A549 (cell line): ENCODE measurements at regions of chr7 and their contacts with region 1.

Region 1: GRCh38 chr7:5237286-5237685 is 45.5 kb upstream of the SLC29A4 start:
- DNase-seq: no peak
- ATAC-seq: no peak
- H3K4me3 ChIP-seq: no peak overlapping the region
- H3K27ac ChIP-seq: no peak overlapping the region
- H3K4me1 ChIP-seq: no peaks in the 10 kb centered on the region
- CTCF ChIP-seq: no peak
- EP300 ChIP-seq: no peak
- POLR2A ChIP-seq: no peak
- RAD21 ChIP-seq: no peak

Region 2: DNA sequence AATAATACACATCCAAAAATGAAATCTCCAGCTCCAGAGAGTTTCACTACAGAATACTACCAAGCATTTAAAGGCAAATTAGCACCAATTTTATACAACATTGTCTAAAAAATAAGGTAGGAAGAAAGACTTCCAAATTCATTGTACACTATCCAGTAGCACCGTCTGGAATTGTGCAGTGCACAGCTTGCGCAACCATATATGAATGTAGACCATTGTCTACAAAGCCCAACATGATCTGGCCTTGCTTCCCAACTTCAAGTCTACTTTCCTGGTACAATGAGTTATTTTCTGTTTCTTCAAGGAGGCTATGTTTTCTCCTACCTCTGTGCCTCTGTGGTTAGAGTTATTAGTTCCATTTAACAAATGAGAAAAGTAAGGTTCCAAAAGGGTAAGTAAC is 670.6 kb before region 1 on chr7:
- CTCF ChIA-PET with region 1: no interaction called
- POLR2A ChIA-PET with region 1: no interaction called
- DNase-seq: no peak
- ATAC-seq: no peak
- H3K4me3 ChIP-seq: no peak overlapping the region
- H3K27ac ChIP-seq: no peak overlapping the region
- H3K4me1 ChIP-seq: no peaks in the 10 kb centered on the region
- CTCF ChIP-seq: no peak
- EP300 ChIP-seq: no peak
- POLR2A ChIP-seq: no peak
- RAD21 ChIP-seq: no peak

Region 3: GRCh38 chr7:4996696-4997222 is 240.5 kb before region 1 on chr7:
- CTCF ChIA-PET with region 1: no interaction called
- POLR2A ChIA-PET with region 1: no interaction called
- DNase-seq: no peak
- ATAC-seq: no peak; a peak in 1 of 6 replicates
- H3K4me3 ChIP-seq: no peak overlapping the region
- H3K27ac ChIP-seq: no peak overlapping the region
- H3K4me1 ChIP-seq: no peaks in the 10 kb centered on the region
- CTCF ChIP-seq: no peak
- EP300 ChIP-seq: no peak
- POLR2A ChIP-seq: no peak
- RAD21 ChIP-seq: no peak

Region 4: GRCh38 chr7:5222841-5223421 is 14.4 kb before region 1 on chr7:
- CTCF ChIA-PET with region 1: interaction called, 21 read pairs
- POLR2A ChIA-PET with region 1: no interaction called
- DNase-seq: no peak
- ATAC-seq: peak in 1 of 2 experiments; percentile 43; a peak in 1 of 6 replicates
- H3K4me3 ChIP-seq: no peak overlapping the region
- H3K27ac ChIP-seq: no peak overlapping the region
- H3K4me1 ChIP-seq: peaks cover 7% of the 10 kb centered on the region; the same call in 1 of the 3 replicates
- CTCF ChIP-seq: no peak
- EP300 ChIP-seq: no peak
- POLR2A ChIP-seq: no peak
- RAD21 ChIP-seq: no peak

Region 5: DNA sequence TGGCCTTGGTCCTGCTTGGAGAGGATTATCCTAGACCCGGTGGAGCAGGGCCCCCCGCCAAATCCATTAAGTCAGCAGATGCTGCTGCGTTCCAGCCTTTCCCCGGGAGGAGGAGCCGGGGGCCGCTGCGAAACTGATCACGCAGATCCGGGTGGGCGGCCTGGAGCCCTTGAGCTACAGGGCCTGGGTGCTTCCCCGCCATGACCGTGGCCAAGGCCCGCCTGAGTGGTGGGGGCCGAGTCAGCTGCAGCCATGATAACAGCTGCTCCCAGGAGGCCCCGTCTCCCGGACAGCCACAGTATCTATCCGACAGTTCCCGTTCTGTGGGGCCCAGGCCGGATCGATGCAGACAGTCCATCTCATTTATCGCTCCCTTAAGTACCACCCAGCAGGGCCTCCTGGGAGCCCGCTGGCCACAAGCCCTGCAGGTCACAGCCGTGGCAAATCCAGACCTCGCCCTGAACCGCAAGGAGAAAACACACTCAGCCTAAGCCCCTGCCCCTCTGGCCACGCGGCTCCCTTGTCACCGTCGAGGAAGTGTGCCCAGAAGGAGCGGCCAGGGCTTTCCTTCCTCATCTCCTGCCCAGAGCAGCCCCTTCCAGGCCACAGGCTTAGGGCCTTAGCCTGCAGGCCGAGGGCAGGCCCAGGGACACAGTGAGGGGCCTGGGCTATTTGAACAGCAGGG is 11.1 kb after region 1 on chr7:
- CTCF ChIA-PET with region 1: interaction called, 30 read pairs
- POLR2A ChIA-PET with region 1: no interaction called
- DNase-seq: no peak
- ATAC-seq: no peak
- H3K4me3 ChIP-seq: no peak overlapping the region
- H3K27ac ChIP-seq: no peak overlapping the region
- H3K4me1 ChIP-seq: no peaks in the 10 kb centered on the region
- CTCF ChIP-seq: no peak
- EP300 ChIP-seq: no peak
- POLR2A ChIP-seq: no peak
- RAD21 ChIP-seq: no peak

Region 6: GRCh38 chr7:5278766-5279165 is 41.5 kb after region 1 on chr7:
- CTCF ChIA-PET with region 1: interaction called, 20 read pairs
- POLR2A ChIA-PET with region 1: no interaction called
- DNase-seq: no peak
- ATAC-seq: no peak
- H3K4me3 ChIP-seq: no peak overlapping the region
- H3K27ac ChIP-seq: no peak overlapping the region
- H3K4me1 ChIP-seq: peaks cover under 1% of the 10 kb centered on the region; the same call in 1 of the 3 replicates
- CTCF ChIP-seq: no peak
- EP300 ChIP-seq: no peak
- POLR2A ChIP-seq: no peak
- RAD21 ChIP-seq: no peak

Region 7: DNA sequence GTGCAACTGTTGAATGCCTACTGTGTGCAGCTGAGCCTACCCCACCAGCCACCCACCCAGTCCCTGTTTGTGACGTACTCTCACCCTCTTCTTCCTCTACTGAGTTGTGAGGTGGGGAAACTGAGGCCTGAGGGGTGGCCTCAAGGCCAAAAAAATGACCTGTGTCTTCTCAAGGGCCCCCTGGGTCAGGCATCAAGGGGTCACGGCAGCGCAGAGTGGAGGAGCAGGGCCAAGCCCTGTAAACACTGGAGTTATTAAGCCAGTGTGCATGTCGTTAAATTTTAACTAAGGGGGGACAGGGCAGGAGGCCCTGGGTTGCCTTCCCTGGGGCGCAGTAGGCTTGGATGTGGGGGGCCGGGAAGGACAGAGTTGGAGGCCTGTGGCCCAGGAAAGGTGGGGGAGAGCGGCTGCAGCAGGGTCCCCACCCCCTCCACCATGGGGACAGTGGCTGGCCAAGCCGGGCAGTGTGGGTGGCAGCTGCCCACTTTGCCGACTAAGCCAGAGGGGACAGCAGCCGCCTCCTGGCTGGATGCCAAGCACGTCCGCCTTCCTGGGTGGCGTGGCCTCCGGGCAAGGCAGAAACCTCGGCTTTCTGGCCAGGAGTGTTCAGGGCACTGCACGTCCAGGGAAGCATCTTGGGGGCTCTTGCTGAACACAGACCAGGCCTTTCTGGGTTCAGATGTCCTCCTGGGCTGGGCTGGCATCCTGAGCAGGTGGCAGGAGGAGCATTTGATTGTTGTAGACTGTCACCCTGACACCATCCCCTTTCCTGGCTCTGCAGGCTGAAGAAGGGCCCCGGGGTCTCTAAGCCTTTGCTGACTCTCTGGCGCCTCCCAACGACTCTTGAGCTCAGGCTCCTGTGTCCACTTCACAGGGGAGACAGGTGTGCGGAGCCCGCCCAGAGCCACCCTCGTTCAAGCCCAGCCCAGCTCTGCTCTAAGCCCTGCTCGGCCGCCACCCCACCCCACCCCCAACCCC is 47.3 kb after region 1 on chr7:
- CTCF ChIA-PET with region 1: interaction called, 20 read pairs
- POLR2A ChIA-PET with region 1: interaction called, 3 read pairs
- DNase-seq: peak; percentile 83 to 84
- ATAC-seq: peak; percentile 71 to 88
- H3K4me3 ChIP-seq: peak overlapping the region; percentile 74; the same call in 1 of the 3 replicates
- H3K27ac ChIP-seq: peak overlapping the region; percentile 12 to 96
- H3K4me1 ChIP-seq: peaks cover 17% of the 10 kb centered on the region
- CTCF ChIP-seq: peak; percentile 60
- EP300 ChIP-seq: no peak
- POLR2A ChIP-seq: no peak
- RAD21 ChIP-seq: peak; percentile 63 to 71

Region 8: GRCh38 chr7:5414916-5415315 is 177.6 kb after region 1 on chr7:
- CTCF ChIA-PET with region 1: no interaction called
- POLR2A ChIA-PET with region 1: no interaction called
- DNase-seq: no peak
- ATAC-seq: no peak
- H3K4me3 ChIP-seq: no peak overlapping the region
- H3K27ac ChIP-seq: no peak overlapping the region
- H3K4me1 ChIP-seq: peaks cover 33% of the 10 kb centered on the region
- CTCF ChIP-seq: no peak
- EP300 ChIP-seq: no peak
- POLR2A ChIP-seq: no peak
- RAD21 ChIP-seq: no peak